Transverse colon (tissue), 4 donors: ENCODE measurements at regions of chr6 and their contacts with region 1.

Region 1: GRCh38 chr6:50128420-50129005 is 78.8 kb upstream of the DEFB112 start:
- DNase-seq: no peak
- H3K4me3 ChIP-seq: no peak overlapping the region
- H3K27ac ChIP-seq: no peak overlapping the region
- H3K4me1 ChIP-seq: no peaks in the 10 kb centered on the region
- H3K27me3 ChIP-seq: no peaks in the 10 kb centered on the region
- CTCF ChIP-seq: peak in 4 of 5 experiments; percentile 13 to 52 (median 48)
- EP300 ChIP-seq: no peak
- POLR2A ChIP-seq: no peak

Region 2: GRCh38 chr6:49522710-49523593 is 605.6 kb before region 1 on chr6:
- in situ Hi-C with region 1: no loop called
- intact Hi-C with region 1: no loop called
- DNase-seq: peak; percentile 15
- H3K4me3 ChIP-seq: no peak overlapping the region
- H3K27ac ChIP-seq: peak overlapping the region; percentile 2 to 68 (median 36)
- H3K4me1 ChIP-seq: peaks cover 0 to 22% (median 5%) of the 10 kb centered on the region in 4 donors
- H3K27me3 ChIP-seq: no peaks in the 10 kb centered on the region
- CTCF ChIP-seq: no peak
- EP300 ChIP-seq: no peak
- POLR2A ChIP-seq: no peak

Region 3: GRCh38 chr6:50602292-50602691 is 473.8 kb after region 1 on chr6:
- in situ Hi-C with region 1: loop called in 2 of 4 experiments (anchors 5 to 25 kb)
- intact Hi-C with region 1: no loop called
- DNase-seq: no peak
- H3K4me3 ChIP-seq: no peak overlapping the region
- H3K27ac ChIP-seq: no peak overlapping the region
- H3K4me1 ChIP-seq: no peaks in the 10 kb centered on the region
- H3K27me3 ChIP-seq: no peaks in the 10 kb centered on the region
- CTCF ChIP-seq: peak; percentile 38 to 79 (median 71)
- EP300 ChIP-seq: no peak
- POLR2A ChIP-seq: no peak